ENCODE measurements at regions of chr19 and their contacts with region 1.

Region 1: DNA sequence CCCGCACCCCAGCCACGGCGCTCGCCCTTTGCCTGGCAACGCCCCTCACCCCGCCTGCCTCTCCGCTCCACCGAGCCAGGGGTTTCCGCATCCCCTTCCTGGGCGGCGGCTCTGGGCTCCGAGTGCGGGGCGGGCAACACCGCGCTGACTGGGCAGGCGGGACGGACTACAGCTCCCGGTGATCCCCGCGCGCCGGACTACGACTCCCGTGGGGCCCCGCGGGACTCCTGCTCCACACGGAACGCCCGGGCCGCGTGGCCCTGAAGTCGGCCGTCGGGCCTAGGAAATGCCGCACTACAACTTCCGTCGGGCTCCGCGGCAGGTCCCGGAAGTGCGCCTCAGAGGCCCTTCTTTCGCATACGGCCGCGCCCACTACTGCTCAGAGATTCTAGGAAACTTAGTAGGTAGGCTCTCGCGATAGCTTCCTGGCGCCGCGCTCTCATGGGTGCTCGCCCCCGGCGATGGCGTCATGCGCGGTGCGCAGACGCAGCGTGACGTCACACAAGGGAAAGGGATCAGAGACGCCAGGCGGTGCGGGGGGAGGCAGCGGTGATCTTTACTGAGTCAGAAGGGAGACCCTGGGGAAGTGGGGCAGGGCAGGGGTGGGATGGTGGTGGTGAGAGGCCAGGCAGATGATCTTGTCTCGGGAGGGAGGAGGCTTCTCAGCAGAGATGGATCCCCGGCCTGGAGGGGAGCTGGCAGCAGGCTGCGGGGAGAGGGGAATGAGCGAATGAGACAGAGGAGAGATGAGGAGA is at the start of gene JOSD2:
- DNase-seq: peak; percentile 99
- ATAC-seq: peak; percentile 94
- H3K4me3 ChIP-seq: peak within 1 kb of the TSS; percentile 19 to 84 (median 62)
- H3K4me3 Mint-ChIP-seq: peak within 1 kb of the TSS; percentile 96
- H3K27ac ChIP-seq: peak within 1 kb of the TSS; percentile 87 to 98
- H3K27ac Mint-ChIP-seq: peak within 1 kb of the TSS; percentile 100
- H3K4me1 ChIP-seq: peaks cover 14 to 20% of the 10 kb centered on the region in 2 donors
- H3K4me1 Mint-ChIP-seq: peaks cover 17% of the 10 kb centered on the region
- H3K27me3 ChIP-seq: peaks cover 0 to 25% (median 2%) of the 10 kb centered on the region in 4 experiments
- H3K27me3 Mint-ChIP-seq: peaks cover 3% of the 10 kb centered on the region
- CTCF ChIP-seq: no peak
- total RNA-seq, gene JOSD2: 32.8 TPM in 2 replicates

Region 2: GRCh38 chr19:50376166-50377050 is 134.8 kb before region 1 on chr19 and contains the start of gene NR1H2:
- CTCF ChIA-PET with region 1: no interaction called
- POLR2A ChIA-PET with region 1: interaction called, 5 read pairs
- intact Hi-C with region 1: loop called (anchors 1 kb)
- DNase-seq: peak; percentile 99
- ATAC-seq: peak; percentile 87
- H3K4me3 ChIP-seq: peak within 1 kb of the TSS; percentile 30 to 98 (median 91)
- H3K4me3 Mint-ChIP-seq: peak within 1 kb of the TSS; percentile 97
- H3K27ac ChIP-seq: peak within 1 kb of the TSS; percentile 99 to 100
- H3K27ac Mint-ChIP-seq: peak within 1 kb of the TSS; percentile 99
- H3K4me1 ChIP-seq: peaks cover 6 to 14% of the 10 kb centered on the region in 2 donors
- H3K4me1 Mint-ChIP-seq: peaks cover 19% of the 10 kb centered on the region
- H3K27me3 ChIP-seq: no peaks in the 10 kb centered on the region
- H3K27me3 Mint-ChIP-seq: no peaks in the 10 kb centered on the region
- CTCF ChIP-seq: no peak
- total RNA-seq, gene NR1H2: 116 and 118 TPM in 2 replicates

Region 3: GRCh38 chr19:50431343-50432220 is 79.7 kb before region 1 on chr19:
- CTCF ChIA-PET with region 1: no interaction called
- POLR2A ChIA-PET with region 1: interaction called, 3 read pairs
- intact Hi-C with region 1: loop called (anchors 2 kb)
- DNase-seq: peak; percentile 96
- ATAC-seq: peak; percentile 65
- H3K4me3 ChIP-seq: peak overlapping the region; percentile 35 to 66 (median 61)
- H3K4me3 Mint-ChIP-seq: peak overlapping the region; percentile 97
- H3K27ac ChIP-seq: peak overlapping the region; percentile 97 to 99
- H3K27ac Mint-ChIP-seq: peak overlapping the region; percentile 99
- H3K4me1 ChIP-seq: peaks cover 70 to 93% of the 10 kb centered on the region in 2 donors
- H3K4me1 Mint-ChIP-seq: peaks cover 84% of the 10 kb centered on the region
- H3K27me3 ChIP-seq: no peaks in the 10 kb centered on the region
- H3K27me3 Mint-ChIP-seq: no peaks in the 10 kb centered on the region
- CTCF ChIP-seq: no peak

Region 4: DNA sequence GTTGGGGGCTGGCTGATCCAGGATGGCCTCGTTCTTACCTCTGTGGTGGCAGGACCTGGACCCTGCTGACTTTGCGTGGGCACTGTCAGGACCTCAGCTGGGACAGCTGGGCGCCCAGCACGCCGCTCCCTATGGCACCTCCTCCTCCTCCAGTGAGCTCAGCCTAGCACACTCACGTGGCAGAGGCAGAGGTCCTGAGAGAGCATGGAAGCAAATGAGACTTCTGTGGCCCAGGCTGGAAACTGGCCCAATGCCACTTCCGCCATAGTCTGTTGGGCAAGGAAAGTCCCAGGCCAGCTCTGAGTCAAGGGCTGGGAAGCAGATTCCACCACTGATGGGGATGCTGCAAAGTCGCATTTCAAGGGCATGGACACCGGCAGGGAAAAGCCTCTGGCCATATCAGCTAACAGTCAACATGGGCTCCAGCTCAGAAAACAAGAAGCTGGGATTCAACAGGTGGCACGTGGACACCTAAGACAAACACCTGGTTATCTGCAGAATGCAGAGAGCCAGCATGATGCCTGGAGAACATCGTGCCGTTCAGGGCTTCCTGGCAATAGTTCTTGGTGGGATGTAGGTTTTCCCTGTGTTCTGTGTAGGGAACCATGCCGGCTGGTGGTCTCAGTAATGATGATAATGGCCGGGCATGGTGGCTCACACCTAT is 61.9 kb before region 1 on chr19:
- CTCF ChIA-PET with region 1: no interaction called
- POLR2A ChIA-PET with region 1: no interaction called
- intact Hi-C with region 1: no loop called
- DNase-seq: no peak
- ATAC-seq: no peak
- H3K4me3 ChIP-seq: no peak overlapping the region
- H3K4me3 Mint-ChIP-seq: no peak overlapping the region
- H3K27ac ChIP-seq: no peak overlapping the region
- H3K27ac Mint-ChIP-seq: no peak overlapping the region
- H3K4me1 ChIP-seq: no peaks in the 10 kb centered on the region
- H3K4me1 Mint-ChIP-seq: peaks cover 8% of the 10 kb centered on the region
- H3K27me3 ChIP-seq: no peaks in the 10 kb centered on the region
- H3K27me3 Mint-ChIP-seq: no peaks in the 10 kb centered on the region
- CTCF ChIP-seq: no peak

Region 5: GRCh38 chr19:50659318-50660087 is 148.3 kb after region 1 on chr19:
- CTCF ChIA-PET with region 1: no interaction called
- POLR2A ChIA-PET with region 1: no interaction called
- intact Hi-C with region 1: no loop called
- DNase-seq: no peak
- ATAC-seq: no peak
- H3K4me3 ChIP-seq: peak overlapping the region in 2 of 5 experiments; percentile 25 to 30
- H3K4me3 Mint-ChIP-seq: peak overlapping the region; percentile 52
- H3K27ac ChIP-seq: no peak overlapping the region
- H3K27ac Mint-ChIP-seq: no peak overlapping the region
- H3K4me1 ChIP-seq: peaks cover 18 to 21% of the 10 kb centered on the region in 2 donors
- H3K4me1 Mint-ChIP-seq: peaks cover 18% of the 10 kb centered on the region
- H3K27me3 ChIP-seq: peaks cover 0 to 53% (median 20%) of the 10 kb centered on the region in 4 experiments
- H3K27me3 Mint-ChIP-seq: peaks cover 58% of the 10 kb centered on the region
- CTCF ChIP-seq: no peak

Region 6: GRCh38 chr19:50764409-50764808 is 253.2 kb after region 1 on chr19:
- CTCF ChIA-PET with region 1: no interaction called
- POLR2A ChIA-PET with region 1: no interaction called
- intact Hi-C with region 1: no loop called
- DNase-seq: no peak
- ATAC-seq: no peak
- H3K4me3 ChIP-seq: no peak overlapping the region
- H3K4me3 Mint-ChIP-seq: no peak overlapping the region
- H3K27ac ChIP-seq: no peak overlapping the region
- H3K27ac Mint-ChIP-seq: no peak overlapping the region
- H3K4me1 ChIP-seq: no peaks in the 10 kb centered on the region
- H3K4me1 Mint-ChIP-seq: no peaks in the 10 kb centered on the region
- H3K27me3 ChIP-seq: no peaks in the 10 kb centered on the region
- H3K27me3 Mint-ChIP-seq: peaks cover 20% of the 10 kb centered on the region
- CTCF ChIP-seq: no peak

Region 7: DNA sequence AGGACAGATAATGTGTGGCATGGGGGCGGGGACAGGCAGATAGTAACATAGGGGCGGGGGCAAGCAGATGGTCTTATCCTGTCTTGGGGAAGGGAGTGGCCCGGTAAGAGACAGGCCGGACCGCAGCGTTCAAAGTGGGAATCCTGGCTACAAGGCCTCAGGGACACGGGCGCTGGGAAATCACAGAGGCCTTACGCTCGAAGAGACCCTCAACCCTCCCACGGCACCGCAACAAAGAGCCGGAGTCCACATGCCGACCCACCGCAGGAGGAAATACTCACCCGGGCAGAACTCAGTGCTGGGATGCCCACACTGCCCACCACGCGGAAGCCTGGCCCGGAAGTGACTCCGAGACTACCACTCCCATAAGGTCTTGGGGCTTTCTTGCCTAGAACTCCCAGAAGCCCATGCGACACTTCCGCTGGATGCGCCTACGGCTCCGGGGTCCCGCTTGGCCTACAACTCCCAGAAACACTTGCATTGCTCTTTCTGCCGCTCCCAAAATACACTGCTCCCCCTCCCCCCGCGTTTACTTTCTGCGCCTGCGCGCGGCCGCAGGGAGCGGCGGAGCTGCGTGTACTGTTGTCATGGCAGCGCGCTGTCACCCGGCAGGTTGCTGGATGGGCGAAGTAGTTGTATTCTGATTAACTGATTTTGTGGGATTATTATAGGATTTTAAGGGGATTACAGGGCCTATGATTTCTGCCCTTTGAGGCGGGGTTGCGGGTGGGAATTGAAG is 597.0 kb after region 1 on chr19 and contains the start of gene CTU1:
- CTCF ChIA-PET with region 1: no interaction called
- POLR2A ChIA-PET with region 1: no interaction called
- intact Hi-C with region 1: loop called (anchors 1 kb)
- DNase-seq: peak; percentile 99
- ATAC-seq: peak; percentile 96
- H3K4me3 ChIP-seq: peak within 1 kb of the TSS; percentile 68 to 88 (median 80)
- H3K4me3 Mint-ChIP-seq: peak within 1 kb of the TSS; percentile 99
- H3K27ac ChIP-seq: peak within 1 kb of the TSS; percentile 57 to 76
- H3K27ac Mint-ChIP-seq: peak within 1 kb of the TSS; percentile 97
- H3K4me1 ChIP-seq: peaks cover 11 to 16% of the 10 kb centered on the region in 2 donors
- H3K4me1 Mint-ChIP-seq: peaks cover 35% of the 10 kb centered on the region
- H3K27me3 ChIP-seq: peaks cover 0 to 6% (median 2%) of the 10 kb centered on the region in 4 experiments
- H3K27me3 Mint-ChIP-seq: no peaks in the 10 kb centered on the region
- CTCF ChIP-seq: no peak
- total RNA-seq, gene CTU1: 8.1 and 8.2 TPM in 2 replicates

Measured in B cell (primary cell).